ENCODE measurements at regions of chr12 and their contacts with region 1.

Region 1: GRCh38 chr12:936377-937345 is 12.8 kb downstream of the RAD52 start:
- DNase-seq: no peak
- H3K4me3 ChIP-seq: no peak overlapping the region
- H3K4me3 Mint-ChIP-seq: no peak overlapping the region
- H3K27ac ChIP-seq: no peak overlapping the region
- H3K27ac Mint-ChIP-seq: peak overlapping the region in 3 of 8 donors; percentile 34 to 80 (median 38)
- H3K4me1 ChIP-seq: no peaks in the 10 kb centered on the region
- H3K4me1 Mint-ChIP-seq: peaks cover 9 to 21% (median 14%) of the 10 kb centered on the region in 3 donors
- H3K27me3 ChIP-seq: no peaks in the 10 kb centered on the region
- H3K27me3 Mint-ChIP-seq: no peaks in the 10 kb centered on the region

Region 2: DNA sequence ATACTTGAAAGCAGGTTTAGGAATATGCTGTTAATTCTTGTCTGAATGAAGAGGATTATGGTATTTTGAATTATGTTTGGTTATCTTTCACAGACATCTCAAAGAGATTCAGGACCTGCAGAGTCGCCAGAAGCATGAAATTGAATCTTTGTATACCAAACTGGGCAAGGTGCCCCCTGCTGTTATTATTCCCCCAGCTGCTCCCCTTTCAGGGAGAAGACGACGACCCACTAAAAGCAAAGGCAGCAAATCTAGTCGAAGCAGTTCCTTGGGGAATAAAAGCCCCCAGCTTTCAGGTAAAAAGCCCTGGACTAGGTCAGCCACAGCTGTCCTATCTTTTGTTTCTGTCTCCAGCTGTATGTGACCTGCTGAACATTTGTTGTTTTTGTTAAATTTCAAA is 39.3 kb before region 1 on chr12:
- CTCF ChIA-PET with region 1: no interaction called
- POLR2A ChIA-PET with region 1: interaction called, 10 read pairs
- DNase-seq: no peak
- H3K4me3 ChIP-seq: no peak overlapping the region
- H3K4me3 Mint-ChIP-seq: no peak overlapping the region
- H3K27ac ChIP-seq: no peak overlapping the region
- H3K27ac Mint-ChIP-seq: peak overlapping the region in 4 of 8 donors; percentile 0 to 29 (median 9)
- H3K4me1 ChIP-seq: no peaks in the 10 kb centered on the region
- H3K4me1 Mint-ChIP-seq: peaks cover 0 to 4% (median 3%) of the 10 kb centered on the region in 3 donors
- H3K27me3 ChIP-seq: no peaks in the 10 kb centered on the region
- H3K27me3 Mint-ChIP-seq: no peaks in the 10 kb centered on the region

Measured in CD8-positive, alpha-beta memory T cell (primary cell).